ENCODE measurements at regions of chr1 and their contacts with region 1.

Region 1: DNA sequence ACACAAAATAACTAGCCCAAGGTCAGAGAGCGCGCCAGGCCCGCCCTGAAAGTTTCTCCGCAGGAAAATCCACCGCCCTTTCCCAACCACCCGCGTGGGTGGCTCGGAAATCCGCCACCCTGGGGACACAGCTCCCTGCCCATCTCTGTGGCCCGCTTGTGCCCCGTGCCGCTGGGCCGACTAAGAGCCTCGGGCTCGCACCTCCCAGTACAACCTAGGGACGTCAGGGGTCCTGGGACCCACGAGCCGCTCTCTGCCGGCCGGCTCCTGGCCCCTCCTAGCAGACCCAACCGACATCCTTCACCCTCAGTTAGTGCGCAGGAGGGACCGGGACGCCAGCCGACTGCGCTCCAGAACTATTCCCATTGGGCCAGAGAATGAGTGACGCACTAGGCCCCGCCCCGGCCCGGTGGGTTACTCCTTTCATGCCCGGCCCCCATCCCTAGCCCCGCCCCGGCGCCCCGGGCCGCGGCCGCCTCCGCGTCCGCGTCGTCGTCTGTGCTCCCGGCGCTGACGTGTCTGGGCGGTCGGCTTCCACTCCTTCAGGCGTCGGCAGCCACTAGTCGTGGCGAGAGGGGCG is 395 bp upstream of the UAP1 start:
- DNase-seq: peak; percentile 98
- H3K4me3 Mint-ChIP-seq: peak overlapping the region; percentile 93
- H3K27ac Mint-ChIP-seq: peak overlapping the region; percentile 93
- H3K4me1 Mint-ChIP-seq: peaks cover 37% of the 10 kb centered on the region
- H3K27me3 Mint-ChIP-seq: no peaks in the 10 kb centered on the region

Region 2: DNA sequence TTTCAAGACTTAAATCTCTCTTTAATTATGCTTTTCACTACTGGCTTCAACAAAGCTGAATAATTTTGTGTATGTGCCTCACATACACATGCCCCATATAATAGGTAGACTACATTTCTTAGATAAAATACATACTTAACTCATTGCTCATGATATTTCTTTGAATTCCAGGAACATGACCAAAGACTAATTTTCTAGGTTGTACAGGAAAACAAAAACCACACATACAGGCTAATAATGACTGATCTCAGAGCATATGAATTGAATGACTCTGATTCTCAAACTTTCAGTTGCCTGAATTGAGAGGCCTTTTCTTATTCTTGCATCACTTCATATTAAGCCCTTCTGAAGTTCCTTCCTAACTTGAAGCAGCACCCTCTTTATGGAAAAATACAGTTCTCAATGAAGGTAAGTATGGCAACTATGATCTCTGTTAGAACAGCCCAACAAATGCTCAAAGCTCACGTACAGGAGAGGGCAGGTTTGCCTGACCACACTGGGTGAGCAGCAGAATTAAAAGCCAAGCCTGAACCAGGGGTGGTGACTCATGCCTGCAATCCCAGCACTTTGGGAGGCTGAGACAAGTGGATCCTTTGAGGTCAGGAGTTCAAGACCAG is 22.2 kb before region 1 on chr1:
- CTCF ChIA-PET with region 1: no interaction called
- POLR2A ChIA-PET with region 1: interaction called, 5 read pairs
- intact Hi-C with region 1: loop called (anchors 2 kb)
- DNase-seq: peak; percentile 35
- H3K4me3 Mint-ChIP-seq: no peak overlapping the region
- H3K27ac Mint-ChIP-seq: peak overlapping the region; percentile 74
- H3K4me1 Mint-ChIP-seq: peaks cover 8% of the 10 kb centered on the region
- H3K27me3 Mint-ChIP-seq: no peaks in the 10 kb centered on the region

Region 3: GRCh38 chr1:163321311-163322305 is 760.5 kb after region 1 on chr1 and contains the start of gene NUF2:
- CTCF ChIA-PET with region 1: no interaction called
- POLR2A ChIA-PET with region 1: no interaction called
- intact Hi-C with region 1: loop called (anchors 2 kb)
- DNase-seq: peak; percentile 98
- H3K4me3 Mint-ChIP-seq: peak within 1 kb of the TSS; percentile 92
- H3K27ac Mint-ChIP-seq: peak within 1 kb of the TSS; percentile 98
- H3K4me1 Mint-ChIP-seq: peaks cover 21% of the 10 kb centered on the region
- H3K27me3 Mint-ChIP-seq: no peaks in the 10 kb centered on the region
- total RNA-seq, gene NUF2: 66.3 to 67.4 TPM

Measured in activated CD4-positive, alpha-beta memory T cell treated with anti-CD3 and anti-CD28 coated beads for 36 hours (primary cell).